Endothelial cell of umbilical vein (primary cell): ENCODE measurements at regions of chr14 and their contacts with region 1.

Region 1: GRCh38 chr14:49633640-49634546 is 1.2 kb downstream of the DNAAF2 start:
- DNase-seq: peak; percentile 96
- H3K4me3 ChIP-seq: peak overlapping the region; percentile 79 to 98 (median 96)
- H3K27ac ChIP-seq: peak overlapping the region; percentile 90
- H3K4me1 ChIP-seq: peaks cover 16% of the 10 kb centered on the region
- H3K27me3 ChIP-seq: no peaks in the 10 kb centered on the region
- CTCF ChIP-seq: peak; percentile 81 to 91
- POLR2A ChIP-seq: peak; percentile 55

Region 2: DNA sequence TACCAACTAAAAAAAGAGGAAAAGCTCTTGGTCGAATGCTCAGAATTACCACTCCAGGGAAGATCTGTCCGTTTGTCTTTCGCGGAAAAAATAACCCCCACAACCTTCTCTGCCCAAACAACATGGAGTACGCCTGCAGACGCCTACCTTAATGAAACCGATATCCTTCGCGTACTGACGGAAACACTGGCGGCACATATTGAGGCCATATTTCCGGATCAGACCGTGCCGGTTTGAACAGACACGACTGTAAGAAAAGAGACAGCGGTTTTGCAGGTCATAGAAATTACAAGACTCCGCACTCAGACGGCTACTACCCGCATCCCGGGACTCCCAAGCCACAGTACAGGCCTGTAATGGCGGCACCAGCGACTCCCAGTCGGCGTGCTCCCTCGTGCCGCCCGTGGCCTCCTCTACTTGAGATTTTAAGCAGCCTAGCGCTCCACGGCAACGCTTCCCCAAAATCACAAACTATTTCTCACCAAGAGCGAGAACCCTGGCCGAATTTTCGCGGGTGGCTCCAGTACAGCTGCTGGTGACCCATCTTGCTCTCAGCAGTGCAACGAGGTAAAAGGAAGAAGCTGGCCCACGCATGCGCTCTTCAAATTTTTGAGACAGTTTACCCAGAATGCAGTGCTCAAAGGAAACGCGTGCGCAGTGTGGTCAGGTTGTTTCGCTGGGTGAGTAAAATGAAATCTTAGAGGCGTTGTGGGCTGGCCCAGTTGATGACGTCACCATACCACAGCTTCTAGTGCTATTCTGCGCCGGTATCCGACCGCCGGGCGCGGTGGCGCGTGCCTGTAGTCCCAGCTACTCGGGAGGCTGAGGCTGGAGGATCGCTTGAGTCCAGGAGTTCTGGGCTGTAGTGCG is 47.9 kb before region 1 on chr14 and contains the start of gene RPS29:
- CTCF ChIA-PET with region 1: interaction called, 11 read pairs
- POLR2A ChIA-PET with region 1: no interaction called
- dilution Hi-C with region 1: no loop called
- intact Hi-C with region 1: loop called (anchors 2 kb)
- DNase-seq: peak; percentile 100
- H3K4me3 ChIP-seq: peak within 1 kb of the TSS; percentile 90 to 99 (median 97)
- H3K27ac ChIP-seq: peak within 1 kb of the TSS; percentile 82
- H3K4me1 ChIP-seq: peaks cover 10% of the 10 kb centered on the region
- H3K27me3 ChIP-seq: no peaks in the 10 kb centered on the region
- CTCF ChIP-seq: no peak
- POLR2A ChIP-seq: peak; percentile 95
- total RNA-seq, gene RPS29: 1,408 and 1,453 TPM in 2 replicates

Region 3: GRCh38 chr14:49620182-49621113 is 13.4 kb before region 1 on chr14 and contains the starts of genes MGAT2 and RPL36AL:
- CTCF ChIA-PET with region 1: interaction called, 80 read pairs
- POLR2A ChIA-PET with region 1: interaction called, 12 read pairs
- dilution Hi-C with region 1: no loop called
- intact Hi-C with region 1: loop called (anchors 1 kb)
- DNase-seq: peak; percentile 99
- H3K4me3 ChIP-seq: peak within 1 kb of the TSS; percentile 59 to 95 (median 83)
- H3K27ac ChIP-seq: peak within 1 kb of the TSS; percentile 85
- H3K4me1 ChIP-seq: peaks cover 40% of the 10 kb centered on the region
- H3K27me3 ChIP-seq: no peaks in the 10 kb centered on the region
- CTCF ChIP-seq: peak; percentile 8 to 51
- POLR2A ChIP-seq: peak; percentile 94
- total RNA-seq, gene MGAT2: 68.1 and 72.6 TPM in 2 replicates
- total RNA-seq, gene RPL36AL: 251 and 260 TPM in 2 replicates

Region 4: GRCh38 chr14:49692811-49693734 is 59.2 kb after region 1 on chr14 and contains the start of gene KLHDC1:
- CTCF ChIA-PET with region 1: interaction called, 14 read pairs
- POLR2A ChIA-PET with region 1: no interaction called
- dilution Hi-C with region 1: no loop called
- intact Hi-C with region 1: loop called (anchors 2 kb)
- DNase-seq: peak; percentile 85
- H3K4me3 ChIP-seq: peak within 1 kb of the TSS; percentile 48 to 91 (median 72)
- H3K27ac ChIP-seq: peak within 1 kb of the TSS; percentile 10
- H3K4me1 ChIP-seq: peaks cover 9% of the 10 kb centered on the region
- H3K27me3 ChIP-seq: no peaks in the 10 kb centered on the region
- CTCF ChIP-seq: no peak
- POLR2A ChIP-seq: peak; percentile 95
- total RNA-seq, gene KLHDC1: 1.2 and 1.6 TPM in 2 replicates

Region 5: GRCh38 chr14:49767562-49768300 is 133.8 kb after region 1 on chr14 and contains the start of gene KLHDC2:
- CTCF ChIA-PET with region 1: interaction called, 49 read pairs
- POLR2A ChIA-PET with region 1: interaction called, 12 read pairs
- dilution Hi-C with region 1: no loop called
- intact Hi-C with region 1: loop called (anchors 1 kb)
- DNase-seq: peak; percentile 88
- H3K4me3 ChIP-seq: peak within 1 kb of the TSS; percentile 68 to 86 (median 75)
- H3K27ac ChIP-seq: peak within 1 kb of the TSS; percentile 86
- H3K4me1 ChIP-seq: peaks cover 16% of the 10 kb centered on the region
- H3K27me3 ChIP-seq: no peaks in the 10 kb centered on the region
- CTCF ChIP-seq: peak in 1 of 2 donors; percentile 34
- POLR2A ChIP-seq: peak; percentile 81
- total RNA-seq, gene KLHDC2: 29.2 and 30.2 TPM in 2 replicates

Region 6: GRCh38 chr14:49808780-49809179 is 174.9 kb after region 1 on chr14:
- CTCF ChIA-PET with region 1: no interaction called
- POLR2A ChIA-PET with region 1: no interaction called
- dilution Hi-C with region 1: no loop called
- intact Hi-C with region 1: no loop called
- DNase-seq: no peak
- H3K4me3 ChIP-seq: no peak overlapping the region
- H3K27ac ChIP-seq: no peak overlapping the region
- H3K4me1 ChIP-seq: no peaks in the 10 kb centered on the region
- H3K27me3 ChIP-seq: no peaks in the 10 kb centered on the region
- CTCF ChIP-seq: no peak
- POLR2A ChIP-seq: no peak

Region 7: GRCh38 chr14:49828640-49829039 is 194.7 kb after region 1 on chr14:
- CTCF ChIA-PET with region 1: interaction called, 33 read pairs
- POLR2A ChIA-PET with region 1: no interaction called
- dilution Hi-C with region 1: no loop called
- intact Hi-C with region 1: loop called (anchors 1 kb)
- DNase-seq: no peak
- H3K4me3 ChIP-seq: no peak overlapping the region
- H3K27ac ChIP-seq: no peak overlapping the region
- H3K4me1 ChIP-seq: no peaks in the 10 kb centered on the region
- H3K27me3 ChIP-seq: no peaks in the 10 kb centered on the region
- CTCF ChIP-seq: no peak
- POLR2A ChIP-seq: no peak

Region 8: DNA sequence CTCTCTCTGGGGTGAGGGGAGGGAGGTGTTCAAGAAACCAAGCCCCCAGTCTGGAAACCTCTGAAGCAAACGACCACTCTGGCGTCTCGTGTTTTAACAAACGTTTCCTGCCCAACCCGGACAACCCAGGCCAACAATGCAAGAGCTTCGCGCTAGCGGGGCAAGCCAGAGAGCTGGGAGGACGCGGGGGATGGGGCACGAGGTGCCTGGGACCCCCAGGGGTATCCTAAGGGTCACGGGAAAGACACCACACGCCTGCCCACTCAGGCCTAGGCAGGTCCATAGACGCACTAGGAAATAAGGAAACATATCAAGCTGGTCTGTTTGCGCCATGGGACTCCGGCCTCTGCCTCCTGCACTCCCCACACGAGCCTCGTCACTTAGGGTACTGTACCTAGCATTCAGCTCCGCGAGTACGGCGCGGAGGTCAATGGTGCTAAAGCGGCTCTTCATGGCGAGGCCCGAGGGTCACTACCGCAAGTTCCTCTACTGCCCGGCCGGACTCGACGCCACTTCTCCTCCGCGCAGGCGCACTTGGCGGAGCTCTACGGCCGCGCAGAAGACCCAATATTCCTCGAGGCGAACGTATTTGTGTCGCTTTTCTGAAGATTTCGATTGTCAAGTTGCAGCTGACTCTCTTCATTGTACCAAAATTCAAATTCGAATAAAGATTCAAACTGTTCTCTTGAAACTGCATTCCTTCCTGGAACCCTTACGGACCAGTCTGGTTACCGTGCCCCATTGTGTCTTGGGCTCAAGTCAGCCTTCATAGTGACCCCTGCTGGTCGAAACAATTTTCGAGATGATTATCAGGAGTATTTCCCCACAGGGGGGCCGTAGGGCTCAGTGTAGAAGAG is 218.6 kb after region 1 on chr14 and contains the start of gene NEMF:
- CTCF ChIA-PET with region 1: interaction called, 19 read pairs
- POLR2A ChIA-PET with region 1: no interaction called
- dilution Hi-C with region 1: no loop called
- intact Hi-C with region 1: loop called (anchors 1 kb)
- DNase-seq: peak; percentile 94
- H3K4me3 ChIP-seq: peak within 1 kb of the TSS; percentile 92 to 97 (median 94)
- H3K27ac ChIP-seq: peak within 1 kb of the TSS; percentile 83
- H3K4me1 ChIP-seq: peaks cover 11% of the 10 kb centered on the region
- H3K27me3 ChIP-seq: no peaks in the 10 kb centered on the region
- CTCF ChIP-seq: peak; percentile 68 to 87
- POLR2A ChIP-seq: peak; percentile 89
- total RNA-seq, gene NEMF: 71.4 and 74.2 TPM in 2 replicates